ENCODE measurements at regions of chr1 and their contacts with region 1.

Region 1: DNA sequence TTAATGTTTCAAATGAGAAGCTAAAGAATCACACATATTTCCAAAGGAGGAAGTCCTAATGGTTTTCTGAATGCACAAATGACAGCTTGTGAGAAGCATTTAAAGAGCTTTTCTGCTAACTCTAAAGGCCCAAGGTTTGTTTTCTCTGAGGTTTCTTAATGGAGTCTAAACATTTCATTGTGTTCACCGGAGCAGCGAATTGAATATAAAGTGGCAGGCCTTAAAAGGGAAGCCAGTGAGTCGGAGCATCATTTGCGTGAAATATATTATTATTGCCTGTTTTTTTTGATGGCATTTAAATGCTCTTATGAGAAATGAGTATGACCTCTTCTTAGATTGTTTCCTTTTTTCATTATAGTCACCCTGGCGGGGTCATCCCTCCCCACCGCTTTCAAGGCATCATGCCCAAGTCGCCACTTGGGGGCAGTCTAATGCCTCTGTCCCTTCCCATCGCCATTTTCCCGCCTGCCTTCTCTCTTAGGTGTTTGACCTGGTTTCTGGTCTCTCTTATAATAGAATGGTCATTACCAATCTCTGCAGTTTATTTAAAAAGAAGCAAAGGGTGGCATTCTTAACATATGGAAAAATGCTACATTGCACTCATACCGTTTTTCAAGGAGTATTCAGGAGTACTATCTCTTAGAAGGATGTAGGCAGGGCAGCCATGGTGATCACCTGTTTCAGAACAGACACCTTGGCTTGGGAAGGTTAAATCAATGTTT is 25.3 kb upstream of the OVAAL start:
- DNase-seq: peak; percentile 63 to 83
- H3K4me3 ChIP-seq: no peak overlapping the region
- H3K4me1 ChIP-seq: peaks cover 5% of the 10 kb centered on the region
- H3K27me3 ChIP-seq: no peaks in the 10 kb centered on the region

Region 2: GRCh38 chr1:180598333-180598974 is 65.0 kb after region 1 on chr1:
- in situ Hi-C with region 1: no loop called
- DNase-seq: no peak
- H3K4me3 ChIP-seq: no peak overlapping the region
- H3K4me1 ChIP-seq: no peaks in the 10 kb centered on the region
- H3K27me3 ChIP-seq: no peaks in the 10 kb centered on the region

Region 3: DNA sequence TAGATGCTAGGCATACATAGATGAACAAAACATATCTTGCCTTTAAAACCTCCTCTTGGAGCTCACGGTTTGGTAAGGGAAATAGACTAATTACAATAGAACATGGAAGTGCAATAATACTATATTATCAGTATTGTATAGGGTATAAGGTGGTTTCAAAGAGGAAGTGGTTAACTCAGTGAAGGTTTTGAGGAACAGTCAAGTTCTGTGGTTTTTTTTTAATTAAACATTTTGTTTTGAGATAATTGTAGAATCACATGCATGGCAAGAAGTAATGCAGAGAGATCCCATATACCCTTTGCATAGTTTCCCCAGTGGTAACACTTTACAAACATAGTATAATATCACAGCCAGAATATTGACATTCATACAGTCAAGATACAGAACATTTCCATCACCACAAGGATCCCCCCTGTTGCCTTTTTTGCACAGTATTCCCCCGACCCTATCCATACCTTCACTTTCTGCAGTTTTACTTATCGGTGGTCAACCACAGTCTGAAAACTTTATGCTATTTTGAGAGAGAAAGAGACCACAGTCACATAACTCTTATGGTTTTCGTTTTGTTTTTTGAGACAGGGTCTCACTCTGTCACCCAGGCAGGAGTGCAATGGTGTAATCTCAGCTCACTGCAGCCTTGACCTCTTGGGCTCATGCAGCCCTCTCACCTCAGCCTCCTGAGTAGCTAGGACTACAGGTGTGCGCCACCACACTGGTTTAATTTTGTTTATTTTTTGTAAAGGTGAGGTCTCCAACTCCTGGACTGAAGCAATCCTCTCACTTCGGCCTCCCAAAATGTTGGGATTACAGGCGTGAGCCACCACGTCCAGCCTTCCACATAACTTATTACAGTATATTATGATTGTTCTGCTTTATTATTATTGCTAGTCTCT is 318.8 kb after region 1 on chr1:
- in situ Hi-C with region 1: loop called (anchors 10 kb)
- DNase-seq: no peak
- H3K4me3 ChIP-seq: no peak overlapping the region
- H3K4me1 ChIP-seq: peaks cover 41% of the 10 kb centered on the region
- H3K27me3 ChIP-seq: no peaks in the 10 kb centered on the region

Region 4: GRCh38 chr1:181424786-181425403 is 891.5 kb after region 1 on chr1:
- in situ Hi-C with region 1: loop called (anchors 25 kb)
- DNase-seq: peak; percentile 63 to 91
- H3K4me3 ChIP-seq: no peak overlapping the region
- H3K4me1 ChIP-seq: no peaks in the 10 kb centered on the region
- H3K27me3 ChIP-seq: no peaks in the 10 kb centered on the region